H1 (cell line): ENCODE measurements at regions of chr18 and their contacts with region 1.

Region 1: DNA sequence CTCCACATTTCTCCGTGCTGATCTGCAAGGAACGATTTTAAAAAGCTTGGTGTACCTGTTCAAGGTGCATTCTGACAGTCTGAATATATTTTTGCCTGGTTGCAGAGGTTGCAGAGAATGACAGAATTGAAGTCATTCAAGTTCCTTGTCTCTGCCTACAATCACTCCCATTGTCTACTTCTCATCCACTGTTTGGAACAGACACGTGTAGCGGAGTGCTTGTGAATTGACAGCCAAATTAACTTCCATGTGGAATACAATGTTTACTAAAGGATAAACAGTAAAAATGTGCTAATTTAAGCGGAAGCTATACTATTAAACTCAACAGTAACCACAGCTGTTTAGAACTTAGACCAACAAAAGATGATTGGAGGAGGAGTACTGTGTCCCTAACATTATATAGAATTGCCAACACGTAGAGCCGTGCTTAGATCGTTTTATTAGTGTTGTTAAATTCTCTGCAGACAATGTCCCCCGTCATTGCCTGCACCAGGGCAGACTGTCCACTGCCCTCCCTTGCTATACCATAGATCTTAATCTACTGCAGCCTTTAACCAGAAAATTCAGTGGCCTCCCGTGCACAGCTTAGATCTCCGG is 87.3 kb upstream of the ZCCHC2 start:
- DNase-seq: no peak
- H3K4me3 ChIP-seq: no peak overlapping the region
- H3K27ac ChIP-seq: no peak overlapping the region
- H3K4me1 ChIP-seq: peaks cover 0 to 4% (median 0%) of the 10 kb centered on the region in 4 experiments; a peak in 1 of 7 replicates
- H3K27me3 ChIP-seq: no peaks in the 10 kb centered on the region
- CTCF ChIP-seq: no peak
- EP300 ChIP-seq: no peak
- POLR2A ChIP-seq: no peak
- RAD21 ChIP-seq: no peak

Region 2: GRCh38 chr18:62458346-62458745 is 22.8 kb after region 1 on chr18:
- CTCF ChIA-PET with region 1: interaction called, 10 read pairs
- POLR2A ChIA-PET with region 1: no interaction called
- DNase-seq: no peak
- H3K4me3 ChIP-seq: no peak overlapping the region
- H3K27ac ChIP-seq: no peak overlapping the region
- H3K4me1 ChIP-seq: peaks cover 0 to 3% (median 0%) of the 10 kb centered on the region in 4 experiments; a peak in 1 of 7 replicates
- H3K27me3 ChIP-seq: no peaks in the 10 kb centered on the region
- CTCF ChIP-seq: peak in 2 of 3 experiments; percentile 18 to 37; a peak in 2 of 4 replicates
- EP300 ChIP-seq: no peak
- POLR2A ChIP-seq: no peak
- RAD21 ChIP-seq: peak in 1 of 2 experiments; percentile 28; a peak in 1 of 4 replicates